Body of pancreas (tissue), 4 donors: ENCODE measurements at regions of chr9 and their contacts with region 1.

Region 1: GRCh38 chr9:122350638-122351355 is 20.0 kb upstream of the PTGS1 start:
- DNase-seq: peak; percentile 78 to 83 (median 79)
- ATAC-seq: peak; percentile 80
- H3K4me3 ChIP-seq: no peak overlapping the region
- H3K27ac ChIP-seq: no peak overlapping the region
- H3K4me1 ChIP-seq: peaks cover 15% of the 10 kb centered on the region
- H3K27me3 ChIP-seq: peaks cover 0 to 5% of the 10 kb centered on the region in 2 donors
- CTCF ChIP-seq: peak; percentile 86 to 97 (median 95)
- POLR2A ChIP-seq: no peak

Region 2: DNA sequence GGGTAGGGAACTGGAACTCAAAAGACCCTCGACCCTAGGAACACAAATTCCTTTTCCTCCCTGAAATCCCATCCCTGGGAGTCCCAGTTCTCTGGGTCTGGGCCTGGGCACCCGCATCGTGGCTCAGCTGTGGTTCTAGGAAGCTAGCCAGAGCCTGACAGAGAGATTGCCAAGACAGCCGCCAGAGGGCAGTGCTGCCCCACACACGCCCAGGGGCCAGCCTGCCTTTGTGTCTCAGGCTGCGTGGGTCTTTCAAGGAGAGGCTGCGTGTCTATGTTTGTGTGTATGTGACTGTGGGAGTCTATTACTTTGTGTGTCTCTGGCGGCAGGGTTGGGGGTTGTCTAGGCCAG is 225.7 kb before region 1 on chr9:
- intact Hi-C with region 1: loop called (anchors 5 kb)
- DNase-seq: peak; percentile 77 to 83 (median 81)
- ATAC-seq: peak; percentile 78
- H3K4me3 ChIP-seq: no peak overlapping the region
- H3K27ac ChIP-seq: no peak overlapping the region
- H3K4me1 ChIP-seq: peaks cover 27% of the 10 kb centered on the region
- H3K27me3 ChIP-seq: peaks cover 0 to 13% of the 10 kb centered on the region in 2 donors
- CTCF ChIP-seq: peak; percentile 86 to 95 (median 92)
- POLR2A ChIP-seq: no peak